ENCODE measurements at regions of chr19 and their contacts with region 1.

Region 1: GRCh38 chr19:39970675-39971379 is at the start of gene PSMC4:
- DNase-seq: peak; percentile 99
- ATAC-seq: peak; percentile 99
- H3K4me3 Mint-ChIP-seq: peak within 1 kb of the TSS; percentile 95
- H3K27ac Mint-ChIP-seq: peak within 1 kb of the TSS; percentile 95
- H3K4me1 Mint-ChIP-seq: peaks cover 43% of the 10 kb centered on the region
- H3K27me3 Mint-ChIP-seq: no peaks in the 10 kb centered on the region
- total RNA-seq, gene PSMC4: 120 to 121 TPM

Region 2: GRCh38 chr19:39792999-39793546 is 177.8 kb before region 1 on chr19:
- CTCF ChIA-PET with region 1: interaction called, 18 read pairs
- POLR2A ChIA-PET with region 1: no interaction called
- DNase-seq: peak; percentile 82
- ATAC-seq: peak; percentile 96
- H3K4me3 Mint-ChIP-seq: peak overlapping the region; percentile 76
- H3K27ac Mint-ChIP-seq: no peak overlapping the region
- H3K4me1 Mint-ChIP-seq: peaks cover 19% of the 10 kb centered on the region
- H3K27me3 Mint-ChIP-seq: peaks cover 22% of the 10 kb centered on the region

Region 3: DNA sequence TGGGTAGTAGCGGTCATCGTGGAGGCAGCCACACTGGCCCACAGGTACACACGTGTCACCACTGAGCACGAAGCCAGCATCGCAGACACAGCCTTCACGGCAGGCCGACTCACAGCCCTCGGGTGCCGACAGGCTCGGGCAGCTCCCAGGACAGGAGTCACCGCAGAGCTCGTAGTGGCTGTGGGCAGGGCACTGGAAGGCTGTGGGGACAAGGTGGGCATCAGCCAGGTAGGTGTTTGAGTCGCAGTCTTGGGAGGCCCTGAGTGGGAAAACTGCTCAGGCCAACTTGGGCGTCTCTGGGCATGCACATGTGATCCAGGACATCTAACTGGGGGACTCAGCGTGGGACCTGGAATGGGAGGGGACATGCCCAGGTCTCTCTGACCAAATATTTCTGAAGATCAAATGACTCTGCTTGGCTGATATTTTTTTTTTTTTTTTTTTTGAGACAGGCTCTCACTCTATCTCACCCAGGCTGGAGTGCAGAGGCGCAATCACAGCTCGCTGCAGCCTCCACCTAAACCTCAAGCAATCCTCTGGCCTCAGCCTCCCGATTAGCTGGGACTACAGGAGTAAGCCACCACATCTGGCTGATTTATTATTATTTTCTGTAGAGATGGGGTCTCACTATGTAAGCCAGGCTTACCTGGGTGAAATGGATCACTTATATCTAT is 80.8 kb before region 1 on chr19:
- CTCF ChIA-PET with region 1: interaction called, 14 read pairs
- POLR2A ChIA-PET with region 1: no interaction called
- DNase-seq: no peak
- ATAC-seq: no peak
- H3K4me3 Mint-ChIP-seq: no peak overlapping the region
- H3K27ac Mint-ChIP-seq: no peak overlapping the region
- H3K4me1 Mint-ChIP-seq: peaks cover 4% of the 10 kb centered on the region
- H3K27me3 Mint-ChIP-seq: no peaks in the 10 kb centered on the region

Region 4: DNA sequence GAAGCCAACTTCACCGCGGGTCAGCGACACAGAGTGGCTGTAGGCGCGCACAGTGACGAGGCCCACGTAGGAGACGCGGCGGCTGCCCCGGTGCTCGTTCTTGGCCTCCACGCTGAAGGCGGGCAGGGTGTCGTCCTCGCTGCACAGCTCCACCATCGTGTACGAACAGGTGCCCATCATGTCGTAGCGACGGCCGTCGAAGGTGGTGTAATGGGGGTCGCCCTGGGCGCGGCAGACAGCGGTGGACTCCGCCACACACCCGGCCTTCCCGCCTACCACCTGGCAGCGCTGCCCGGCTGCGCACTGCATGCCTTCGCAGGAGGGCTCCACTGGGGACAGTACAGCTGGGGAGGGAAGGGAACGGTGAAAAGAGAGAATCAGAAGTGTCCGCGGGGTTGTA is 46.4 kb before region 1 on chr19:
- CTCF ChIA-PET with region 1: interaction called, 21 read pairs
- POLR2A ChIA-PET with region 1: interaction called, 8 read pairs
- DNase-seq: no peak
- ATAC-seq: no peak
- H3K4me3 Mint-ChIP-seq: no peak overlapping the region
- H3K27ac Mint-ChIP-seq: no peak overlapping the region
- H3K4me1 Mint-ChIP-seq: no peaks in the 10 kb centered on the region
- H3K27me3 Mint-ChIP-seq: no peaks in the 10 kb centered on the region

Region 5: GRCh38 chr19:39951686-39952085 is 19.1 kb before region 1 on chr19:
- CTCF ChIA-PET with region 1: interaction called, 133 read pairs
- POLR2A ChIA-PET with region 1: interaction called, 21 read pairs
- DNase-seq: no peak
- ATAC-seq: no peak
- H3K4me3 Mint-ChIP-seq: no peak overlapping the region
- H3K27ac Mint-ChIP-seq: peak overlapping the region; percentile 95
- H3K4me1 Mint-ChIP-seq: peaks cover 56% of the 10 kb centered on the region
- H3K27me3 Mint-ChIP-seq: no peaks in the 10 kb centered on the region

Region 6: DNA sequence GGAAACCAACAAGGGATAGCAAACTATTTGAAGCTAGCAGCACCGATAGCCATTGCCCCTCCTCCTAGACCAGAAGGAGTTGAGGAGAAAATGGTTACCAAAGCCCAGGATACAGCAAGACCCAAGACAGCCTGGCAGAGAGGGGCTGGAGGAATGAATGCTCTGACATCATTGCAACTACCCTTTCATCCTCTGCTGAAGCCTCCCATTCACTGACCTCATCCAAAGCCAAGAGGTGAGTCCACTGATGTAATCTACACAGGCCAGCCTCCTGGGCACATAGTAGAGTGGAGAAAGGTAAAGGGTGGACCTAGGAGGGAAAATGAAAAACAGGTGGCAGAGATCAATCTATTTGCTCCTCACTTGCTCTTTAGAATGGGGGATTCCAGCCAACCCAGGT is 162.7 kb after region 1 on chr19:
- CTCF ChIA-PET with region 1: no interaction called
- POLR2A ChIA-PET with region 1: no interaction called
- DNase-seq: no peak
- ATAC-seq: no peak
- H3K4me3 Mint-ChIP-seq: no peak overlapping the region
- H3K27ac Mint-ChIP-seq: no peak overlapping the region
- H3K4me1 Mint-ChIP-seq: no peaks in the 10 kb centered on the region
- H3K27me3 Mint-ChIP-seq: peaks cover 40% of the 10 kb centered on the region

Region 7: DNA sequence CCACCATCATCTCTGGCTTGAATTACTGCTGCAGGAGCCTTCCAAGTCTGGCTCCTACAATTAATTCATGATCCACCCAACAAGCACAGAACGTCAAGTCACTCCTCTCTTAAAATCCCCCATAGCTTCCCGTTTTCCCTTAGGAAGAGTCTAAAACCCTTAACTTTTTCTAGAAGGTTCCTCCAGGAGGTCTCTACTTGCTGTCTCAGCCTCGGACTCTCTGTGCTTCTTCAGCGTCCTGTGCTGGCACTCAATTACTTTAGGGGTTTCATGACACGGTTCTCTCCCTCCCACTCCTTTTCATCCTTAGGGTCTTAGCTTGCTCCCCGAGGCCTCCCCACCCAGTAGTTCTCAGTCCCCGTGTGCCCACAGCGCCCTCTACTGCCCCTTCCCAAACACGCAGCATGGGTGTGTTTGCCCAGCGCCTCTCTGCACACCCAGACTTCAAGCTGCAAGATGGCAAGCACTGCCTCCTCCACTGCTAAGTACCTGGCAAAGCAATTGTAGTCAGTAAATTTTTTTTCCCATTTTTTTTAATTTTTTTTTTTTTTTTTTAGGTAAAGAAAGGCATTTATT is 194.6 kb after region 1 on chr19:
- CTCF ChIA-PET with region 1: interaction called, 13 read pairs
- POLR2A ChIA-PET with region 1: no interaction called
- DNase-seq: peak; percentile 77
- ATAC-seq: peak; percentile 69
- H3K4me3 Mint-ChIP-seq: no peak overlapping the region
- H3K27ac Mint-ChIP-seq: no peak overlapping the region
- H3K4me1 Mint-ChIP-seq: peaks cover 15% of the 10 kb centered on the region
- H3K27me3 Mint-ChIP-seq: no peaks in the 10 kb centered on the region